Mammary epithelial cell (primary cell): ENCODE measurements at regions of chr7 and their contacts with region 1.

Region 1: GRCh38 chr7:155763691-155764437 is 48.4 kb downstream of the SHH start:
- DNase-seq: no peak
- H3K4me3 ChIP-seq: no peak overlapping the region
- H3K27ac ChIP-seq: no peak overlapping the region
- H3K4me1 ChIP-seq: no peaks in the 10 kb centered on the region
- H3K27me3 ChIP-seq: no peaks in the 10 kb centered on the region
- CTCF ChIP-seq: no peak

Region 2: GRCh38 chr7:155380221-155380861 is 383.5 kb before region 1 on chr7:
- CTCF ChIA-PET with region 1: no interaction called
- dilution Hi-C with region 1: no loop called
- in situ Hi-C with region 1: loop called (anchors 25 kb)
- intact Hi-C with region 1: loop called (anchors 1 kb)
- DNase-seq: peak; percentile 59
- H3K4me3 ChIP-seq: no peak overlapping the region
- H3K27ac ChIP-seq: no peak overlapping the region
- H3K4me1 ChIP-seq: peaks cover 18% of the 10 kb centered on the region
- H3K27me3 ChIP-seq: peaks cover 72% of the 10 kb centered on the region
- CTCF ChIP-seq: peak; percentile 85 to 93

Region 3: DNA sequence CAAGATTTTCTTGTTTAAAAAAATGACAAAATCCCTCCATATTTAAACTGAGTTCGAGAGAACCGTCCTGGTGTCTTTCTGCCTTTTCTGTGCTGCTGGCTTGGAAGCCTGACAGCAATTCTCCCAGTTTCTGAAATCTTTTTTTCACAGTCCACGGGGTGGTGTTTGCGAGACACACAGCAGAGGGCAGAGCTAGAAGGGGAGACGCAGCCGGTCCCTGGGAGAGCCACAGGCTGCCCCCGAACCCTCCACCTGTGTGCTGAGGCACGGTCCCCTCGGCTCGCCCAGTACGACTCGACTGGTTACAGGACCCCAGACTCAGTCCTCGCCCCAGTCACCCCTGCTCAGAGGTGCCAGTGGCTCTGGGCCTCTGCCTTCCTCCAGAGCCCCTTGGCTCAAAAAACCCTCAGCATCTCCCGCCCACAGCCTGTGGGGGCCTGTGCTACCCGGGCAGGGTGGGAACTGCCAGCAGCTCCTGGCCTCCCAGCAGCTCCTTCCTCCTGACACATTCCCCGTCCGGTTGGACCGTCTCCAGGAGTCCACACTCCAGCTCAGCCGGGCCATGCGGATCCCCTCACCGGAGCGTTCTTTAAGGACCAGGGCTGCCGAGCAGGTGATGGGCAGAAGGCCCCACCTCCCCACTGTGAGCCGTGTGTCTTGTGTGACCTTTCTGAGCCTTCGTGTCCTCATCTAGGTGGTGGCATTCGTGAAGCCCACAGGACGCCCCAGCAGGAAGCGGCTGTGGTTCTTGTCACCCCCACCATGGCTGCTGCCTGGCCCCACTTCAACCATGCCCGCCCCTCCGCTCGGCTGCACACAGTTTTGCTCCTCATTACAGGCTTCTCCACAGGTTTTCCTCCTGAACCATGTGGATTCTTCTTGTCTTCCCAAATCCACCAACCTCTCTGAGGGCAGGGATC is 358.2 kb before region 1 on chr7:
- CTCF ChIA-PET with region 1: no interaction called
- dilution Hi-C with region 1: no loop called
- in situ Hi-C with region 1: no loop called
- intact Hi-C with region 1: loop called (anchors 1 kb)
- DNase-seq: no peak
- H3K4me3 ChIP-seq: no peak overlapping the region
- H3K27ac ChIP-seq: no peak overlapping the region
- H3K4me1 ChIP-seq: no peaks in the 10 kb centered on the region
- H3K27me3 ChIP-seq: peaks cover 24% of the 10 kb centered on the region
- CTCF ChIP-seq: no peak